H1 (cell line): ENCODE measurements at regions of chr11 and their contacts with region 1.

Region 1: GRCh38 chr11:72015511-72016171 is 16.9 kb downstream of the IL18BP start:
- DNase-seq: no peak
- H3K4me3 ChIP-seq: no peak overlapping the region
- H3K27ac ChIP-seq: no peak overlapping the region
- H3K4me1 ChIP-seq: no peaks in the 10 kb centered on the region
- H3K27me3 ChIP-seq: no peaks in the 10 kb centered on the region
- CTCF ChIP-seq: peak; percentile 45 to 62 (median 57)
- EP300 ChIP-seq: no peak
- POLR2A ChIP-seq: no peak
- RAD21 ChIP-seq: peak; percentile 24 to 42; a peak in 3 of 4 replicates

Region 2: DNA sequence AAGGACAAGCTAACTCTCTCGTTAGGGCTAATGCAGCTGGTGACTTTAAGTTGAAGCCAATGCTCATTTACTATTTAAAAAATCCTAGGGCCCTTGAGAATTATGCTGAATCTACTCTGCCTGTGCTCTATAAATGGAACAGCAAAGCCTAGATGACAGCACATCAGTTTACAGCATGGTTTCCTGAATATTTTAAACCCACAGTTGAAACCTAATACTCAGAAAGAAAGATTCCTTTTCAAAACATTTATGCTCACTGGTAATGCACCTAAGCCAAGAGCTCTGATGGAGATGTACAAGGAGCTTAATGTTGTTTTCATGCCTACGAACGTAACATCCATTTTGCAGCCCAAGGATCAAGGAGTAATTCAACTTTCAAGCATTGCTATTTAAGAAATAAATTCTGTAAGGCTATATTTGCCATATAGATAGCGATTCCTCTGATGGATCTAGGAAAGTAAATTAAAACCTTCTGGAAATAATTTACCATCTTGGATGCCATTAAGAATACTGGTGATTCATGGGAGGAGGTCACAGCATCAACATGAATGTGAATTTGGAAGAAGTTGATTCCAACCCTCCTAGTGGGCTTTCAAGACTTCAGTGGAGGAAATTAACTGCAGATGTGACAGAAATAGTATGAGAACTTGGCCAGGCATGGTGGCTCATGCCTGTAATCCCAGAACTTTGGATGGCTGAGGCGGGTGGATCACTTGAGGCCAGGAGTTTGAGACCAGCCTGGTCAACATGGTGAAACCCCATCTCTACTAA is 101.7 kb before region 1 on chr11:
- CTCF ChIA-PET with region 1: no interaction called
- POLR2A ChIA-PET with region 1: no interaction called
- DNase-seq: no peak
- H3K4me3 ChIP-seq: no peak overlapping the region
- H3K27ac ChIP-seq: no peak overlapping the region
- H3K4me1 ChIP-seq: no peaks in the 10 kb centered on the region
- H3K27me3 ChIP-seq: no peaks in the 10 kb centered on the region
- CTCF ChIP-seq: no peak
- EP300 ChIP-seq: no peak
- POLR2A ChIP-seq: no peak
- RAD21 ChIP-seq: no peak

Region 3: GRCh38 chr11:71977743-71978418 is 37.8 kb before region 1 on chr11:
- CTCF ChIA-PET with region 1: interaction called, 34 read pairs
- POLR2A ChIA-PET with region 1: no interaction called
- DNase-seq: peak in 1 of 2 experiments; percentile 52
- H3K4me3 ChIP-seq: no peak overlapping the region
- H3K27ac ChIP-seq: no peak overlapping the region
- H3K4me1 ChIP-seq: no peaks in the 10 kb centered on the region
- H3K27me3 ChIP-seq: no peaks in the 10 kb centered on the region
- CTCF ChIP-seq: peak in 2 of 3 experiments; percentile 58 to 60; a peak in 3 of 4 replicates
- EP300 ChIP-seq: no peak
- POLR2A ChIP-seq: no peak
- RAD21 ChIP-seq: peak; percentile 51 to 62

Region 4: DNA sequence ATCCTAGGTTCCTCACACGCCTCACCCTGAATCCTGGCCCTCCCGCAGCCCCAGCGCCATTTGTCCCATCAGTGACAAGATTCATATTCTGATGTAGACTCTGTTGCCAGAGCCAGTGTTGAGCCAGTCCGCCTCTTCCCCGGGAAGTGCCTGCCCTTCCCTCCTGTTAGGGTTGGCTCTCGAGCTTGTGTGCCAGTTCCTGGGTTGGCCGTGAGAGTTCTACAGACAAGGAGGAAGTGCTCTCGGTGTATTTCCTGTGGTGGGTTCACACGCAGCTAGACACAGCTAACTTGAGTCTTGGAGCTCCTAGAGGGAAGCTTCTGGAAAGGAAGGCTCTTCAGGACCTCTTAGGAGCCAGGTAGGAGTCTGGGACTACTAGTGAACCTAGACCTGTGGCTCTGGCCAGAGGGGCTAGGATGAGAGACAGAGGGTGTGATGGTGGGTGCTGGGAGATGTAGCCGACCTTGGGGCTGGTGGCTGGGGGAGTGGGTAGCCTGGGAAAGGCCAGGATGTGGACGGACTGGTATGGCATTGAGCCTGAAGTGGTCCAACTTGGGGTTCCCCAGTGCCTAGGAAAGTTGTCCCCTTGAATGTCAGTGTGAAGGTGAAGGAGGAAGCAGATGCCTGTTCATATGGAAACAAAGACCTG is 16.9 kb before region 1 on chr11 and contains the start of gene IL18BP:
- CTCF ChIA-PET with region 1: interaction called, 28 read pairs
- POLR2A ChIA-PET with region 1: interaction called, 9 read pairs
- DNase-seq: no peak
- H3K4me3 ChIP-seq: no peak within 1 kb of the TSS
- H3K27ac ChIP-seq: no peak within 1 kb of the TSS
- H3K4me1 ChIP-seq: no peaks in the 10 kb centered on the region
- H3K27me3 ChIP-seq: no peaks in the 10 kb centered on the region
- CTCF ChIP-seq: no peak
- EP300 ChIP-seq: no peak
- POLR2A ChIP-seq: no peak
- RAD21 ChIP-seq: no peak
- total RNA-seq, gene IL18BP: 9.8 and 10.2 TPM in 2 replicates

Region 5: DNA sequence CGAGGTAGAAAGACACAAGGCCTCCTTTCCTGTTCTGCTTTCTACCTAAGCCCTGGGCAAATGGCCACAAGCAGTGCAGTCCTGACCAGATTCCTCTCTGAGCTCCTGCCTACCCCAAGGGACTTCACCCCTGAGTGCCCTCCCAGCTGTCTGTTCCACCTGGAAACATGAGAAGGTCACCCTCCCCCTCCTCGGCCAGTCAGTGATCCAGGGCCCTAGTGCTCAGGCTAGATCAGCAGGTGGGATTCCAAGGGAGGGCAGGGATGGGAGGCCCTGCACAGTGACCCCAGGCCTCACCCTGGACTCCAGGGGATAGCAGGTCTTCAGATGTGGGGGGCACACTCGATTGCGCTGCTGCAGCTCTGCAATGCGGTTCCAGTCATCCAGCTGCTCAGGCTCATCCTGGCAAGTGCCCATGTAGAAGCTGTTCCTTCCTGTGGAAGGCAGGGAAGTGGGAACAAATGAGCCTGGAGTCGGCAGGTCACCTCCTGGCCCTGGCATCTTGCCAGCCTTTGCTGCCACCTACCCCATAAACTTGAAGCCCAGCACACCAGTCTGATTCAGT is 10.6 kb before region 1 on chr11:
- CTCF ChIA-PET with region 1: interaction called, 18 read pairs
- POLR2A ChIA-PET with region 1: interaction called, 7 read pairs
- DNase-seq: no peak
- H3K4me3 ChIP-seq: no peak overlapping the region
- H3K27ac ChIP-seq: no peak overlapping the region
- H3K4me1 ChIP-seq: no peaks in the 10 kb centered on the region
- H3K27me3 ChIP-seq: no peaks in the 10 kb centered on the region
- CTCF ChIP-seq: no peak
- EP300 ChIP-seq: no peak
- POLR2A ChIP-seq: no peak
- RAD21 ChIP-seq: no peak

Region 6: GRCh38 chr11:72085621-72086351 is 70.1 kb after region 1 on chr11:
- CTCF ChIA-PET with region 1: interaction called, 423 read pairs
- POLR2A ChIA-PET with region 1: interaction called, 11 read pairs
- DNase-seq: no peak
- H3K4me3 ChIP-seq: no peak overlapping the region
- H3K27ac ChIP-seq: no peak overlapping the region
- H3K4me1 ChIP-seq: peaks cover 0 to 2% (median 0%) of the 10 kb centered on the region in 4 experiments; a peak in 2 of 7 replicates
- H3K27me3 ChIP-seq: no peaks in the 10 kb centered on the region
- CTCF ChIP-seq: no peak
- EP300 ChIP-seq: no peak
- POLR2A ChIP-seq: no peak
- RAD21 ChIP-seq: no peak

Region 7: DNA sequence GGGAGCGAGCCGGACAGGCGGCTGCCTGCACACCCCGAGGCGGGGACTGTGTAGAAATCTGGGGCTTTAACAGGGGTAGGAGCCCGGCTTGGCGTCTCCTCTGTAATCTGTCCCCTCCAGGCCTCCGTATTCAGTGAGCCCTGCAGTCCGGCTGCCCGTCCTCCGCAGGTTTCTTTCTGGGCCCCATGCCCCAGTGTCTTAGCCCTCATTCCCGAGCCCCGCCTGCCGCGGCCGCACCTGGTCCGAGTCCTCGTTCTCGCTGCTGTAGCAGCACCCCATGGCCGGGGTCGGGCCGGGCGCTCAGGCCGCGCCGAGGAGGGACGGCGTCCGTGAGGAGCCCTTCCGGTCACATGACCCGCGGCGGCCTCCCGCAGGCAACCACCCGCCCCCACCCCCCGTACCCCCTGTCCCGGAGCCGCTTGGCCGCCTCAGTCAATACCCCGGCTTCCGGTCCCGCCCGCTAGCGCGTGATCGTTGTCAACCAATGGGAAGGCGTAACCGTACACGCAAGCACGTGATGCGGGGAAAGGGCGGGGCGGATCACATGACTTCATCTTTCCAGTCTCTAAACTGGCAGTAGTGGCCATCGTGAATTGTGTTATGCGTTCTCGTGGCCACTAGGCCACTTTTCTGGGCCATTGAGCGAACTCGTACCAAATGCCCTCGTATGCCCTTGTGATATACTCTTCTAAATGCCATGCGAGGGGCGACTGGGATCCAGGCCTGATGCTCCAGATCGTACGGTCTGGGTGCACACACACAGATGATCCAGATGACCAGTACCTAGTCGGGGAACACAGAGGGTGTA is 87.5 kb after region 1 on chr11 and contains the start of gene LAMTOR1:
- CTCF ChIA-PET with region 1: interaction called, 423 read pairs
- POLR2A ChIA-PET with region 1: no interaction called
- DNase-seq: peak; percentile 97 to 98
- H3K4me3 ChIP-seq: peak within 1 kb of the TSS; percentile 95 to 98 (median 97)
- H3K27ac ChIP-seq: peak within 1 kb of the TSS; percentile 86
- H3K4me1 ChIP-seq: peaks cover 3 to 14% (median 5%) of the 10 kb centered on the region in 4 experiments; a peak in 6 of 7 replicates
- H3K27me3 ChIP-seq: no peaks in the 10 kb centered on the region
- CTCF ChIP-seq: peak; percentile 16 to 60 (median 36); a peak in 3 of 4 replicates
- EP300 ChIP-seq: peak in 1 of 2 experiments; percentile 39; a peak in 1 of 3 replicates
- POLR2A ChIP-seq: peak; percentile 88 to 96
- RAD21 ChIP-seq: peak; percentile 21 to 37; a peak in 2 of 4 replicates
- total RNA-seq, gene LAMTOR1: 81.0 and 82.1 TPM in 2 replicates

Region 8: DNA sequence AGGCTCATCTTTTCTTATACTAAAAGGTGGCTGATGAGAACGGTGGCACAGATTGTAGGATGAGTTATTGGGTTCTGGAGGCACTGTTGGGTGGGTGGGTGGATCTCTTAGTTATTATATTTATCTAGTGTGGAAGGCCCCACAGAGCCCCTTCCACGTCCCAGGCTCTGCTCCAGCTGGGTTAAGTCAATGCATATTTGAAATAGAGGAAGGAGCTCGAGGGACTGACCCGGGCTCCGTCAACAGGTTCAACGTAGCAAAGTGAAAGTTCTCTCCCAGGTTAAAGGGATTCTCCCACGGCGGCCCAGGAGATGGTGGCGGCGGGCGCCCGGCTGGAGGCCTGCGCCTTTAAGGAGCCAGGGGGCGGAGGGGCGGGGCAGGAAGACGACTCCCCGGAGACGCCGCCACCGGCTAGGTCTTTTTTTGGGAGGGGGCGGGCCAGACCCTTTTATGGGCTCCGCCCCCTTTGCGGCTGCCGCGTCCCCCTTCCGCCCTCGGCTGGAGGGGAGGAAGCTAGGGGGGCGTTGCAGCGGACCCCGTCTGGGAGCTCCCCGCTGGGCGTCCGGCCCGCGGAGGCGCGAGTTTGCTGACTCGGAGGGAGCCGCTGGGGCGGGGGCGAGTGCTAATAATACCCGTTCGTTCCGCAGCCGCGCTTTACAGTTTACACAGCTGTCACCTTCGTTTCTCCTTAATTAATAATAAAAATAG is 207.4 kb after region 1 on chr11:
- CTCF ChIA-PET with region 1: no interaction called
- POLR2A ChIA-PET with region 1: no interaction called
- DNase-seq: peak; percentile 84 to 92
- H3K4me3 ChIP-seq: peak overlapping the region; percentile 67 to 89 (median 76)
- H3K27ac ChIP-seq: no peak overlapping the region
- H3K4me1 ChIP-seq: peaks cover 10 to 11% (median 11%) of the 10 kb centered on the region in 4 experiments; a peak in 6 of 7 replicates
- H3K27me3 ChIP-seq: no peaks in the 10 kb centered on the region; a peak in 2 of 7 replicates
- CTCF ChIP-seq: 0 out of 4 replicates have a peak, but pooled peaks of 1 of the 3 experiments have one; percentile 1
- EP300 ChIP-seq: peak in 1 of 2 experiments; percentile 42; a peak in 1 of 3 replicates
- POLR2A ChIP-seq: no peak
- RAD21 ChIP-seq: no peak; a peak in 1 of 4 replicates

Region 9: GRCh38 chr11:72238040-72238450 is 222.4 kb after region 1 on chr11:
- CTCF ChIA-PET with region 1: interaction called, 10 read pairs
- POLR2A ChIA-PET with region 1: no interaction called
- DNase-seq: peak; percentile 85 to 92
- H3K4me3 ChIP-seq: peak overlapping the region in 3 of 4 experiments; percentile 9 to 60 (median 34); a peak in 4 of 8 replicates
- H3K27ac ChIP-seq: 0 out of 2 replicates have a peak overlapping the region, but pooled peaks have one; percentile 6
- H3K4me1 ChIP-seq: peaks cover 3 to 29% (median 23%) of the 10 kb centered on the region in 4 experiments
- H3K27me3 ChIP-seq: peaks cover 36 to 47% (median 44%) of the 10 kb centered on the region in 4 experiments
- CTCF ChIP-seq: peak; percentile 88 to 95 (median 92)
- EP300 ChIP-seq: peak in 1 of 2 experiments; percentile 56; a peak in 1 of 3 replicates
- POLR2A ChIP-seq: no peak
- RAD21 ChIP-seq: peak; percentile 74 to 81

Region 10: DNA sequence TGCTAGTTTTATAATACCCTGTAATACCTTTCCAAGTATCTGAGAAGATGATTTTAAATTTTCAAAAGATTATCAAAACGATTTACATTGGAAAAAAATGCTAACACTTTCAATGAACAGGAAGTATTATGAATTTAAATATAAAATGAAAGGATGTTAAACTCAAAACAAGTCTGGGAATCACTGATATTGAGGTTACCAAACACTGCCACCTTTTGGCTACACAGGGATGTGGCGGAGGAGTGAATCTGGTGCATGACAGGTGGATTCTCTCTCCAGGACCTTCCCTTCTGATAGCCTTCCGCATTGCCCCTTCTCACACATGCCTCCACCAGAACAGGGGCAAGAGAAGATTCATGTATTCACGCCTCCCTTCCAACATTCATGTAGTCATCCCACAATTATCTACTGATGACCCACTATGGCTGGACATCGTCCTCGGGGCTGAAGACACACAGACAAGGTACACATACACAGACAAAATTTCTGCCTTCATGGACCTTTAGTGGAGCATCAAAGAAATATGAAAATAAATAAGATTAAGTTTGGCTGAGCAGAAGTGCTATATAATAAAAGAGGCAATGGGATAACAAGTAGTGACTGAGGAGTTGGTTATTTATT is 833.3 kb after region 1 on chr11:
- CTCF ChIA-PET with region 1: no interaction called
- POLR2A ChIA-PET with region 1: no interaction called
- DNase-seq: peak in 1 of 2 experiments; percentile 57
- H3K4me3 ChIP-seq: no peak overlapping the region
- H3K27ac ChIP-seq: no peak overlapping the region
- H3K4me1 ChIP-seq: no peaks in the 10 kb centered on the region
- H3K27me3 ChIP-seq: no peaks in the 10 kb centered on the region
- CTCF ChIP-seq: peak; percentile 63 to 77 (median 73)
- EP300 ChIP-seq: no peak
- POLR2A ChIP-seq: no peak
- RAD21 ChIP-seq: peak; percentile 71 to 76